ENCODE measurements at regions of chr2 and their contacts with region 1.

Region 1: DNA sequence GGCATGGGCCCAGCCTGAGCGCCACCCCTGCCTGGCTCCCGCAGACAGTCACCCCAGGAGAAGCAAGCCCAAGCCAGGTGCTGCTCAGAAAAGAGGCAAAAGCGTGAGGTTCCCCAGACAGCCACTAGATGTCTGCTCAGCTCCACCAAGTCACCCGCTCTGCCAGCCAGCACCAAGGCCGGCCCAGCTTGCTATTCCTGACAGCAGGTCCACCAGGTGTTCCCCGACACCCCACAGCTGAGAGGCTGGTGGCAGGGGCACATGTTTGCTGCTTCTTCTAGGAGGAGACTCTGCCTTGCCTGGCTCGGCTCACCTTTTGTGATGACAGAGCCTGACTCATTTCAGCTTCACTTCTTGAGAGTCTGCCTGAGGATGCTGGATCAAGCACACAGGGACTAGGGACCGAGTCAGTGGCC is 206.7 kb downstream of the MGAT5 start:
- DNase-seq: peak; percentile 76
- ATAC-seq: peak; percentile 89
- H3K4me3 ChIP-seq: no peak overlapping the region
- H3K27ac ChIP-seq: no peak overlapping the region
- H3K4me1 ChIP-seq: peaks cover 42% of the 10 kb centered on the region
- H3K27me3 ChIP-seq: peaks cover 0 to 3% of the 10 kb centered on the region in 2 experiments; a peak in 3 of 5 replicates
- CTCF ChIP-seq: peak; percentile 97
- EP300 ChIP-seq: no peak
- POLR2A ChIP-seq: no peak
- RAD21 ChIP-seq: peak; percentile 95

Region 2: DNA sequence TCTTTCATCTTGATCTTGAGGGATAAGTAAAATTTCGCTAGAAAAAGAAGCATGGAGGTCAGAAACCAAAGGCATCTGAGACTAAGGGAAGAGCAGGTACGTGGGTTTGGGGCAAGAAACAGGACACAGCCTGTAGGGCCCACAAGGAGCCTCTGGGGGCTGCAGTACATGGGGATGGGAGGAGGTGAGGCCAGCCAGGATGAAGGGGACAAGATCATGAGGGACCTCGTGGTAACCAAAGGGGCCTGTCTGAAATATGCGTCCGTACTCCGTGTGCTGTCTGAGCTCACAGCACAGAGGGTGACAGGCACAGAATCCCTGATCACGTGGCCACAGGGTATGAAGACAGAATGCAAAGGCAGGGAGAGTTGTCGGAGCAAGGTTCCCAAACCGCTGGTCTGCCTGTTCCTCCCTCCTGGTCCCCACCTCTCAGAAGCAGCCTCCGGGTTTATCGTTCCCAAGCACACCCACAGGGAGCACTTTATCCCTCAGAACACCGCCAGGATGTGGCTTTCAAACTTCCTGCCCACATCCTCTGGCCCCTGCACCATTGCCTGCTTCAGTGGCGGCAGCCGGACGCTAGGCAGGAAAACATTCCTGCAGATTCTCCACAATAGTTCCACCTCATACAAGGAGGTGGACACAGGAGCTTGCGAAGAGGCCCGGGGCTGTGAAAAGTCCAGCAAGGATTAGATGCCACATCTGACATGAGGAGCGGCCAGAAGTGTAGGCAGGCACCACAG is 246.2 kb after region 1 on chr2:
- CTCF ChIA-PET with region 1: no interaction called
- POLR2A ChIA-PET with region 1: no interaction called
- in situ Hi-C with region 1: no loop called
- intact Hi-C with region 1: loop called (anchors 10 kb)
- DNase-seq: peak; percentile 35
- ATAC-seq: peak; percentile 91
- H3K4me3 ChIP-seq: peak overlapping the region; percentile 4 to 50 (median 24); a peak in 4 of 6 replicates
- H3K27ac ChIP-seq: no peak overlapping the region
- H3K4me1 ChIP-seq: peaks cover 20% of the 10 kb centered on the region
- H3K27me3 ChIP-seq: no peaks in the 10 kb centered on the region
- CTCF ChIP-seq: no peak
- EP300 ChIP-seq: no peak
- POLR2A ChIP-seq: no peak
- RAD21 ChIP-seq: no peak

Region 3: DNA sequence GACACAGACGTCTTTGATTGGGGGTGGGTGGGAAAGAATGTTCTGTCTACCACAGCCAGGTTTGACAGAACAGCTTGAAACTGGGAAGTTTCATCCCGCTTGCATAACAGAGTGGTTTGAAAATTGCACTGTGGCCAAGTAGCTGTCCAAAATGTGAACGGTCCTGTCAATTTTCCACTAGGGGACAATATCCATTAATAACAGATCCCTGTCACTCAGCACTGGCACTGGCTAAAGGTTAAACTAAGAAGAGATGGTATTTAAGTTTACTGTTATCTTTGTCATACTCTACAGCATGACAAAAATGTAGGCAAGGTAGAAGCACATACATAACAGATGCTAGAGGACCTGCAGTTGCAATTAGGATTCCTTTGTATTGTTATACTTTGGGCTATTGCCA is 322.2 kb after region 1 on chr2:
- CTCF ChIA-PET with region 1: interaction called, 7 read pairs
- POLR2A ChIA-PET with region 1: no interaction called
- in situ Hi-C with region 1: loop called (anchors 5 kb)
- intact Hi-C with region 1: loop called (anchors 1 kb)
- DNase-seq: peak; percentile 73
- ATAC-seq: peak; percentile 95
- H3K4me3 ChIP-seq: no peak overlapping the region
- H3K27ac ChIP-seq: no peak overlapping the region
- H3K4me1 ChIP-seq: no peaks in the 10 kb centered on the region
- H3K27me3 ChIP-seq: no peaks in the 10 kb centered on the region
- CTCF ChIP-seq: peak; percentile 83
- EP300 ChIP-seq: no peak
- POLR2A ChIP-seq: no peak
- RAD21 ChIP-seq: peak; percentile 58

Region 4: GRCh38 chr2:134897932-134898331 is 437.3 kb after region 1 on chr2:
- CTCF ChIA-PET with region 1: interaction called, 5 read pairs
- POLR2A ChIA-PET with region 1: no interaction called
- in situ Hi-C with region 1: loop called (anchors 5 kb)
- intact Hi-C with region 1: loop called (anchors 2 kb)
- DNase-seq: no peak
- ATAC-seq: no peak
- H3K4me3 ChIP-seq: no peak overlapping the region
- H3K27ac ChIP-seq: no peak overlapping the region
- H3K4me1 ChIP-seq: peaks cover 9% of the 10 kb centered on the region
- H3K27me3 ChIP-seq: no peaks in the 10 kb centered on the region
- CTCF ChIP-seq: no peak
- EP300 ChIP-seq: no peak
- POLR2A ChIP-seq: no peak
- RAD21 ChIP-seq: no peak

Measured in HepG2 (cell line).